PC-3 (cell line): ENCODE measurements at regions of chr7 and their contacts with region 1.

Region 1: GRCh38 chr7:24896031-24896501 is 83.9 kb downstream of the OSBPL3 start:
- DNase-seq: no peak
- ATAC-seq: no peak
- H3K4me3 ChIP-seq: no peak overlapping the region
- H3K27ac ChIP-seq: no peak overlapping the region
- H3K4me1 ChIP-seq: peaks cover 18% of the 10 kb centered on the region
- H3K27me3 ChIP-seq: no peaks in the 10 kb centered on the region
- CTCF ChIP-seq: no peak

Region 2: DNA sequence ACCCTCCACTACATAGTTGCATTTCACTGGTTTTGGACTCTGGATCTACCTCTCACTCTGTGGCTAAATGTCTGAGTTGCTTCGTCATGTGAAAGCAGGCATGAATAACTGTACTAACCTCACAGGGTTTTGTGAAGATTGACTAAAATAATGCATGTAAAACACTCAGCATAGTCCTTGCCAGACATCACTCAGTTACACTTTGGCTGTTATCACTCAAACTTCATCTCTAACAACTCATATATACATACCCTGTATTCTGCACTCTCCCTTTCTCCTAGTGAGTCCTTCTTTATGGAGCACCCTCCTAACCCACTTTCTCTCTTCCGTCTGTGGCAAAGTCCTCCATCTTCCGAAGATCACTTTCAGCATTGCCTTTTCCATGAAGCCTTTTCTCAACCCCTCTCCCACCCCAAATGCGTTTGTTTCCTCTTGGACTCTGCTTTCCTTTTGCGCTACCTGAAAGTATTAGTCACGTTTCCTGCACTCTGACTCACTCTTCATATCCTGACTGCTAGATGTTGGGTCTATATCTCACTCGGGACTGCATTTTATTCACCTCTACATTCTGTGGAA is 11.3 kb after region 1 on chr7:
- CTCF ChIA-PET with region 1: no interaction called
- POLR2A ChIA-PET with region 1: no interaction called
- intact Hi-C with region 1: loop called (anchors 1 kb)
- DNase-seq: peak; percentile 81
- ATAC-seq: peak; percentile 92
- H3K4me3 ChIP-seq: peak overlapping the region; percentile 43; the same call in 1 of the 2 replicates
- H3K27ac ChIP-seq: peak overlapping the region; percentile 80
- H3K4me1 ChIP-seq: peaks cover 52% of the 10 kb centered on the region
- H3K27me3 ChIP-seq: no peaks in the 10 kb centered on the region
- CTCF ChIP-seq: no peak

Region 3: GRCh38 chr7:25093268-25093826 is 197.3 kb after region 1 on chr7:
- CTCF ChIA-PET with region 1: no interaction called
- POLR2A ChIA-PET with region 1: no interaction called
- intact Hi-C with region 1: loop called (anchors 10 kb)
- DNase-seq: peak; percentile 90
- ATAC-seq: peak; percentile 89
- H3K4me3 ChIP-seq: no peak overlapping the region
- H3K27ac ChIP-seq: no peak overlapping the region
- H3K4me1 ChIP-seq: peaks cover 4% of the 10 kb centered on the region; the same call in 1 of the 2 replicates
- H3K27me3 ChIP-seq: no peaks in the 10 kb centered on the region
- CTCF ChIP-seq: peak; percentile 91